Activated naive CD4-positive, alpha-beta T cell treated with anti-CD3 and anti-CD28 coated beads, Interleukin-2, amount 10 ng/mL, durations not matched to agents 7 days and 5 days (primary cell): ENCODE measurements at regions of chr5 and their contacts with region 1.

Region 1: GRCh38 chr5:67215583-67216471 is 19.2 kb upstream of the CD180 start:
- DNase-seq: peak; percentile 88
- H3K4me3 Mint-ChIP-seq: peak overlapping the region; percentile 53
- H3K27ac Mint-ChIP-seq: peak overlapping the region; percentile 98
- H3K4me1 Mint-ChIP-seq: peaks cover 65% of the 10 kb centered on the region
- H3K27me3 Mint-ChIP-seq: no peaks in the 10 kb centered on the region

Region 2: DNA sequence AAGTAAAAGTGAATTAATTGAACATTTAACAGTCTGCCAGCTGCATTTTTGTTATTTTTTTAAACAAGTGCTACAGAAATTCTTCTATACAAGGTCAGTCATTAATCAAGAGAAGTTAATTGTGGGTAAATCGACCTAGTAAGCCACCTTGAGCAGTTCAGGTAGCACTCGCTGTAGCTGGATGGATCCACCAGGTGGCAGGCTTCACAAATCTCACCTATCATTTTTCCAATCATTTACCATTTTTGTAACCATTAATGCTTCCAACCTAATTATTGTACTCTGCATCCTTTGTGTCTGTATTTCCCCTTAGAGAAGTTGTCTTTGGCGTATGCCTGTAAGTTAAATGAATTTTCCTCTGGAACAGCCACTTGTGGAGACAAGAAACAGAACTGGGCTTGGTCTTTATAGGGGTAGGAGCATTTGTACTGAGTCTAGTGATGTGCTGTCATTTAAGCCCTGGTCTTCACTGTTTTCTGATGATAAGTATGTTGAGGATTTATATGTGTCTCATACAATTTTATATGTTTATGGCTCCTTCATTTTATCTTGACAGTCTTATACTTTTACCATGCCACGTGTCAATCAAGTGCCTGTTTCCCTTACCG is 58.7 kb before region 1 on chr5:
- CTCF ChIA-PET with region 1: interaction called, 161 read pairs
- DNase-seq: peak; percentile 64
- H3K4me3 Mint-ChIP-seq: no peak overlapping the region
- H3K27ac Mint-ChIP-seq: peak overlapping the region; percentile 34
- H3K4me1 Mint-ChIP-seq: peaks cover 57% of the 10 kb centered on the region
- H3K27me3 Mint-ChIP-seq: no peaks in the 10 kb centered on the region

Region 3: GRCh38 chr5:67165526-67166459 is 50.0 kb before region 1 on chr5:
- CTCF ChIA-PET with region 1: interaction called, 161 read pairs
- DNase-seq: peak; percentile 93
- H3K4me3 Mint-ChIP-seq: peak overlapping the region; percentile 82
- H3K27ac Mint-ChIP-seq: peak overlapping the region; percentile 95
- H3K4me1 Mint-ChIP-seq: peaks cover 68% of the 10 kb centered on the region
- H3K27me3 Mint-ChIP-seq: no peaks in the 10 kb centered on the region